ENCODE measurements at regions of chr2 and their contacts with region 1.

Region 1: GRCh38 chr2:6408057-6408456 is 457.6 kb downstream of the CMPK2 start:
- DNase-seq: no peak
- H3K4me3 ChIP-seq: no peak overlapping the region
- H3K27ac ChIP-seq: no peak overlapping the region
- H3K4me1 ChIP-seq: no peaks in the 10 kb centered on the region
- H3K27me3 ChIP-seq: no peaks in the 10 kb centered on the region
- CTCF ChIP-seq: no peak
- POLR2A ChIP-seq: no peak

Region 2: GRCh38 chr2:5164776-5165525 is 1243.1 kb before region 1 on chr2:
- intact Hi-C with region 1: loop called (anchors 5 kb)
- DNase-seq: no peak
- H3K4me3 ChIP-seq: no peak overlapping the region
- H3K27ac ChIP-seq: peak overlapping the region; percentile 31 to 32
- H3K4me1 ChIP-seq: no peaks in the 10 kb centered on the region
- H3K27me3 ChIP-seq: no peaks in the 10 kb centered on the region
- CTCF ChIP-seq: no peak
- POLR2A ChIP-seq: no peak

Region 3: GRCh38 chr2:6392966-6393365 is 15.1 kb before region 1 on chr2:
- intact Hi-C with region 1: no loop called
- DNase-seq: no peak
- H3K4me3 ChIP-seq: no peak overlapping the region
- H3K27ac ChIP-seq: no peak overlapping the region
- H3K4me1 ChIP-seq: no peaks in the 10 kb centered on the region
- H3K27me3 ChIP-seq: no peaks in the 10 kb centered on the region
- CTCF ChIP-seq: no peak
- POLR2A ChIP-seq: no peak

Measured in breast epithelium (tissue), 4 donors.